Testis (tissue), 5 donors: ENCODE measurements at regions of chr10 and their contacts with region 1.

Region 1: DNA sequence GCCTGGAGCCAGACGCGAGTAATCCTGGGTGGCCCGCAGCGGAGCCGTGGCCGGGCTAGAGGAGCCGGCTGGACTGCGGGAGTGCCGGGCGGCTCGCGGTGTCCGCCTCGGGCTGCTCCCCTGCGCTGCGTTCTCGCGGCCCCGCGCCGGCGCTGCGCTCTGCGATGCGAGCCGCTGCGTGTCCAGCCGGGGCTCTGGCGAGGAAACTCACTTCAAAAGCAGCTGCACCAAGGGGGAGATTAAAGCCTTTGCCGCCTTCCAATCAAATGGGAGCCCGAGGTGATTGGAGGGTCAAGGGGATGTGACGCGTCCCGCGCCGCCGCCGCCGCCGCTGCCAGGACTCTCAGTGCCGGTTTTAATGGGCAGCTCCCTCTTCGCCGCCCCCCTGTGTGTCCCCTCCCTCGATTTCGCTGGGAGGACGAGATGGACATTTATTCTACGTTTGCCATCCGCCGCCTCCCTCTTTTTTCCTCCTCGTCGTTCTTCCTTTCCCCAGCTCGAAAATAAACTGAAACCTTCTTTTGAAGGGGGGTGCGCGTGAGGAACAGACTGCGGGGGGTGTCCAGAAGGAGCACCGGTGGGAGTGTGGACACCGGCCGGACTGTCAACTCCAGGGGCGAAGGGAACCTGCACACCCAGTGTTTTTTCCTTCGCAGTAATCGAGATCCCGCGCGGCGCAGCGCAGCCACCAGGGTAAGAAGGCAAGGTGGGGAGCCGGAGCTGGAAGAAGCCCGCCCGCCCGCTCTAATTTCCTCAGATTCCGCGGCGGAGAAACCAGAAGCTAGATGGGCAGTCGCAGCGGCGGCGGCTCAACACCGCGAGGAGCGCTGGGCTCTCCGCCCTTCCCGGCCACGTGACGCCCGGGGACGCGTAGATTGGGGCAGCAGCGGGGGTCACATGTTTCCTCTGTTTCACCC is at the start of gene ZNF503:
- DNase-seq: peak; percentile 98
- H3K4me3 ChIP-seq: peak within 1 kb of the TSS; percentile 78 to 83
- H3K27ac ChIP-seq: peak within 1 kb of the TSS; percentile 85 to 96
- H3K4me1 ChIP-seq: no peaks in the 10 kb centered on the region
- H3K27me3 ChIP-seq: no peaks in the 10 kb centered on the region
- CTCF ChIP-seq: peak in 2 of 3 experiments; percentile 51 to 53
- POLR2A ChIP-seq: peak; percentile 61
- total RNA-seq, gene ZNF503: 8.0 to 9.8 TPM

Region 2: DNA sequence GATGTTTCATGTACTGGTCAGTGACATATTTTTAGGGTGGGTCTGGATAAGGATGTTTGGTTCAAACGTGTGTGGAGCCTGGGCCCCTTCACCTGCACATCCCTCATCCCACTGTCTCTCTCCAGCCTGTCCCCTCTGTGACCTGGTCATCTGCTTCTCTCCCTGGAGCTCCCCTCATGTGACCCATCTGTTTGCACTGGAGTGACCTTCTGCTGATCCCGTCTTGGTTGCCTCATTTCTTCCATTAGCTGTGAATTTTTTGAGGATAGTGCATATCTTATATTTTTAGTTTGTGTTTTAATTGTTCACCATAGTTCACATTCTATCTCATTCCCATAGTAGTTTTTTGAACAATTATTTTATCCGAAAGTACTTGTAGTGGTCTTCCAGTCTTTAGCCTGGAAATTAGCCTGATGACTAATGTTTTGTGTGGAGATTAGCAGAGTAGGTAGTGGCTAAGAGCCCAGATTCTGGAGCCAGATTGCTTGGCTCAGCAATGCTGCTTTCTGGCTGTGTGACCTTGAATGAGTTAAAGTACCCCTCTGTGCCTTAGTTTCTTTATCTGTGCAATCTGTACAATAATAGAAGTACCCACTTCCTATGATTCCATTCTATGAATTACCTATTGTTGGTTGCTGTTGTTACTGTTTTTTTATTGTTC is 254.1 kb after region 1 on chr10:
- intact Hi-C with region 1: loop called (anchors 5 kb)
- DNase-seq: no peak
- H3K4me3 ChIP-seq: no peak overlapping the region
- H3K27ac ChIP-seq: peak overlapping the region in 1 of 2 donors; percentile 29
- H3K4me1 ChIP-seq: peaks cover 35% of the 10 kb centered on the region
- H3K27me3 ChIP-seq: no peaks in the 10 kb centered on the region
- CTCF ChIP-seq: no peak
- POLR2A ChIP-seq: no peak

Region 3: DNA sequence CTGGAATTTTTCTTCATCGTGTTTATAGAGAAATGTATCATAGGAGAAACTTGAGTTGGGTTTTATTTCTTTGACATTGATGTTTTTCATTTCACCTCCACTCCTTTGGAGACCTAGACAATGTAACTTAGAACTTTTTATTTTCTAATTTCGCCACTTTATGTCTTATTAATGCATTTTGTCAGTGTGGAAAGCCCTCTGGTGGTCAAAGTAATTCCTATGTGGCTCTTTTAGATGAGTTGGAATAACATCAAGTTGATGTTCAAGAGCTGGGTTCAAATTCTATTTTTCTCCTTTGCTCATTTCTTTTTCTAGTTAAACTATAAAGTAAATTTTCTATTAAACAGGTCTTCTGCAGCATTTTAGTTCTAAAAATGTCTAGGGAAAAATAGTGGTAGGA is 508.2 kb after region 1 on chr10:
- intact Hi-C with region 1: loop called (anchors 10 kb)
- DNase-seq: peak; percentile 24
- H3K4me3 ChIP-seq: no peak overlapping the region
- H3K27ac ChIP-seq: no peak overlapping the region
- H3K4me1 ChIP-seq: no peaks in the 10 kb centered on the region
- H3K27me3 ChIP-seq: no peaks in the 10 kb centered on the region
- CTCF ChIP-seq: peak; percentile 58 to 69 (median 62)
- POLR2A ChIP-seq: no peak

Region 4: DNA sequence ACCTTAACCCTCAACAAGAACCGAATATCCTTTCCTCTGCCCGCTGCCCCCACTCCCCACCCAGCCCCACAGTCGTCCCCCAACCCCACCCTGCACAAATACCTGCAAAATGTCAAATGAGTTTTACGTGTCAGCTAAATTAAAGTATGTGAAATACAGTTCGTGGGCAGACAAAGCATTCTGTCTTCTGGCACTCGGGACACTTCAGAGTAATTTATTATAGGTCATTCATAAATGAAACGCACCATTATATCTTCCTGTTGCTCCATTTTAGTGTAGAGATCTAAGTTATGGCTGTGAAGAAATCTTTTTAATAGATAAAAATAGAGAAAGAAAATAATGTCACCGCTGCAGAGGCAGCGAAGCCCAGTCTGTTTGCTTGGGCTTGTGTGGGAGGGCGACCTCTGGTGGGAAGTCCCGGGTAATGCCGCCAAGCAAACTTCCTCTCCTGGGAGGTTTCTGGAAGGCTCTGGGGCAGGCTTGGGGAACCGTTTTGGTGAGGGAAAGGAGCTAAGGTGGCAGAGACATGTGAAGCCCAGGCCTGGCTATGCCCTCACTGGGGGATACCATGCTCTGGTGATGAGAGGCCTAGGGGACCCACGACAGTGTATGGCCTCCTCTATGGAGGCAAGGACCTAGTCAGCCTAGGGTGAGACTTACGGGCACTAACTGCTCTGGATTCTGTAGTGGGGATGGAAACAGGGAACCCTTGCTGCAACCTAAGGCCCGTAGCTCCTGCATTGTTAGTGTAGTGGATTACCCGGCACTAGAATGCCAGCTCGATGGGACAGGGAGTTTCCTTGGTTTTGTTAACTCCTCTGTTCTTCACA is 634.5 kb after region 1 on chr10:
- intact Hi-C with region 1: loop called (anchors 10 kb)
- DNase-seq: peak; percentile 86
- H3K4me3 ChIP-seq: no peak overlapping the region
- H3K27ac ChIP-seq: no peak overlapping the region
- H3K4me1 ChIP-seq: no peaks in the 10 kb centered on the region
- H3K27me3 ChIP-seq: no peaks in the 10 kb centered on the region
- CTCF ChIP-seq: peak; percentile 77 to 90 (median 88)
- POLR2A ChIP-seq: no peak